ENCODE measurements at regions of chr19 and their contacts with region 1.

Region 1: GRCh38 chr19:56507446-56508289 is at the start of gene ZNF471:
- DNase-seq: peak; percentile 99 to 100 (median 99)
- ATAC-seq: peak; percentile 100
- H3K4me3 ChIP-seq: peak within 1 kb of the TSS; percentile 35 to 87 (median 73)
- H3K27ac ChIP-seq: peak within 1 kb of the TSS; percentile 90 to 100 (median 98)
- H3K4me1 ChIP-seq: peaks cover 0 to 13% (median 6%) of the 10 kb centered on the region in 12 donors
- H3K27me3 ChIP-seq: no peaks in the 10 kb centered on the region
- CTCF ChIP-seq: no peak
- POLR2A ChIP-seq: peak in 1 of 2 donors; percentile 62
- total RNA-seq, gene ZNF471: 3.3 to 7.9 (median 4.7) TPM

Region 2: DNA sequence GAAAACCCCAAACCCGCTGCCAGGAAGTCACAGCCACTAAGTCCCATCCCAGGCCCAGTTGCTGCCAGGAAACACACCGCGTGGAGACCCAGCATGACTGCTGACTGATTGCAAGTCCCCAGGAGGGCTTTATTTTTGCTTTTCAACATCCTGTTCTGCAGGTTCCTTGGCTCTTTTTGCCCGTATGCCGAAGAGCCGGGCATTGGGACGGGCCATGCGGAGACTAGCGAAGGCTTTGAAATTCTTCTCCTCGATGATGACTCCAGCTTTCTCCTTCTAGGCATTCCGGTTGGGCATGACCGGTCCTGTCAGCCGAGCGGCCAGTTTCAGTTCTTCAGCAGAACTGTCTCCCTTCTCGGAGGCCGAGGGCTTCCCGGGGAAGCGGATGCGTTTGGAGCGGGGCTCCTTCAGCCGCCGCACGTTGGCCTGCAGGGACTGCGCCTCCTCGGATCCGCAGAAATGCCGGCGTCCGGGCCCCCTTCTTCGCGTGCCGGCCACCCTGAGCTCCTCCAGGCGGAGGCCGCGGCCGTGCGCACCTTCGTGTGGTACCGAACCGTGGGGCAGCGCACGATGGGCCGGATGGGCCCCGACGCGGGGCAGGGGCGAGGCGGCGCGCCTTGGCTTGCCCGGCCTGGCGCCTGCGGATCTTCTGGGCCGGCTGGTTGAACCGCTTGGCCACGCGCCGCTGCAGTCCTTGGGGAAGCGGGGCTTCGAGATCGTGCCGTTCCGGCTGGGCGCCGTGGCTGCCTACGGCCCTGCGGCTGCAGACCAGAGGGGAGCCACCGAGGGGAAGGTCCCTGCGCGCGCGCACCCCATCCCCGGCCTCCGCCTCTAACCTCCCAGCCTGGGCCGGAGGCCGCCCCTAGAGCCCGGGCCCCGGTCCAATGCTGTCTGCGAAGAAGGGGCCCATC is 290.4 kb before region 1 on chr19:
- intact Hi-C with region 1: no loop called
- DNase-seq: peak in 3 of 5 donors; percentile 21 to 60 (median 31)
- ATAC-seq: peak in 2 of 4 donors; percentile 33 to 52
- H3K4me3 ChIP-seq: peak overlapping the region; percentile 14 to 57 (median 49)
- H3K27ac ChIP-seq: no peak overlapping the region
- H3K4me1 ChIP-seq: peaks cover 0 to 10% (median 6%) of the 10 kb centered on the region in 12 donors
- H3K27me3 ChIP-seq: peaks cover 0 to 14% (median 4%) of the 10 kb centered on the region in 9 donors
- CTCF ChIP-seq: no peak
- POLR2A ChIP-seq: no peak

Region 3: GRCh38 chr19:56403764-56404704 is 103.6 kb before region 1 on chr19 and contains the start of gene ZNF583:
- intact Hi-C with region 1: loop called in 3 of 10 experiments (anchors 1 to 10 kb)
- DNase-seq: peak; percentile 96 to 98 (median 98)
- ATAC-seq: peak; percentile 95 to 99 (median 98)
- H3K4me3 ChIP-seq: peak within 1 kb of the TSS; percentile 51 to 91 (median 72)
- H3K27ac ChIP-seq: peak within 1 kb of the TSS; percentile 89 to 99 (median 96)
- H3K4me1 ChIP-seq: peaks cover 0 to 19% (median 14%) of the 10 kb centered on the region in 12 donors
- H3K27me3 ChIP-seq: no peaks in the 10 kb centered on the region
- CTCF ChIP-seq: peak in 1 of 12 donors; percentile 8
- POLR2A ChIP-seq: peak in 1 of 2 donors; percentile 60
- total RNA-seq, gene ZNF583: 4.1 to 7.9 (median 5.4) TPM

Region 4: GRCh38 chr19:56477429-56478338 is 30.0 kb before region 1 on chr19:
- intact Hi-C with region 1: loop called in 3 of 10 experiments (anchors 1 to 2 kb)
- DNase-seq: peak; percentile 93 to 97 (median 94)
- ATAC-seq: peak; percentile 96 to 98 (median 96)
- H3K4me3 ChIP-seq: peak overlapping the region; percentile 58 to 95 (median 80)
- H3K27ac ChIP-seq: peak overlapping the region; percentile 4 to 93 (median 84)
- H3K4me1 ChIP-seq: peaks cover 0 to 29% (median 14%) of the 10 kb centered on the region in 12 donors
- H3K27me3 ChIP-seq: no peaks in the 10 kb centered on the region
- CTCF ChIP-seq: no peak
- POLR2A ChIP-seq: peak in 1 of 2 donors; percentile 77

Region 5: GRCh38 chr19:56538254-56538760 is 30.6 kb after region 1 on chr19:
- intact Hi-C with region 1: loop called in 2 of 10 experiments (anchors 2 kb)
- DNase-seq: peak; percentile 93 to 96 (median 94)
- ATAC-seq: peak; percentile 98 to 99 (median 98)
- H3K4me3 ChIP-seq: peak overlapping the region; percentile 52 to 94 (median 82)
- H3K27ac ChIP-seq: peak overlapping the region; percentile 88 to 98 (median 96)
- H3K4me1 ChIP-seq: peaks cover 0 to 20% (median 10%) of the 10 kb centered on the region in 12 donors
- H3K27me3 ChIP-seq: no peaks in the 10 kb centered on the region
- CTCF ChIP-seq: no peak
- POLR2A ChIP-seq: peak in 1 of 2 donors; percentile 49

Region 6: GRCh38 chr19:56660381-56661107 is 152.9 kb after region 1 on chr19:
- intact Hi-C with region 1: loop called in 1 of 10 experiments (anchors 10 kb)
- DNase-seq: peak; percentile 17 to 80 (median 58)
- ATAC-seq: peak; percentile 20 to 82 (median 75)
- H3K4me3 ChIP-seq: peak overlapping the region in 10 of 12 donors; percentile 1 to 30 (median 22)
- H3K27ac ChIP-seq: no peak overlapping the region
- H3K4me1 ChIP-seq: peaks cover 0 to 10% (median 3%) of the 10 kb centered on the region in 12 donors
- H3K27me3 ChIP-seq: no peaks in the 10 kb centered on the region
- CTCF ChIP-seq: peak; percentile 26 to 62 (median 46)
- POLR2A ChIP-seq: no peak

Region 7: DNA sequence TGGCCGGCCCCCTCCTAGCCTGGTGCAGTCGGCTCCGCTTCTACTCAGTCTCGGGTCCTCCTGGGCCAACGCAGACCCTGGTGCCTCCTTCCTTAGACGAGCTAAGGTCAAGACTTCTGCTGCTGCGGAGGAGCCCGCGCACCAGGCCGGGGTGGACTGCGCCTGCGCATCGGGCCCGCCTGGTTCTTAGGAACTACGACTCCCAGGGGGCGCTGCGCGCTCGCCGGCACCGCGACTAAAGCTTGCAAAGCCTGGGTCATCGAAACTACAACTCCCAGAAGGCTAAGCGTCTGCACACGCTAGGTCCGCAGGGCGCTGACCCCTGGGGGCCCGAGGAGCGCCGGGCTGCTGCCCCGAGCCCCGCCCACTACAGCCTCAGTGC is 163.9 kb after region 1 on chr19 and contains the start of gene ZNF835:
- intact Hi-C with region 1: loop called in 2 of 10 experiments (anchors 5 to 10 kb)
- DNase-seq: peak; percentile 96 to 99 (median 97)
- ATAC-seq: peak; percentile 95 to 99 (median 96)
- H3K4me3 ChIP-seq: peak within 1 kb of the TSS; percentile 57 to 91 (median 82)
- H3K27ac ChIP-seq: peak within 1 kb of the TSS in 10 of 12 donors; percentile 43 to 83 (median 61)
- H3K4me1 ChIP-seq: peaks cover 0 to 20% (median 12%) of the 10 kb centered on the region in 12 donors
- H3K27me3 ChIP-seq: no peaks in the 10 kb centered on the region
- CTCF ChIP-seq: peak in 9 of 12 donors; percentile 19 to 65 (median 44)
- POLR2A ChIP-seq: peak in 1 of 2 donors; percentile 76
- total RNA-seq, gene ZNF835: 1.9 to 16.0 (median 5.0) TPM